ENCODE measurements at regions of chr12 and their contacts with region 1.

Region 1: GRCh38 chr12:9073076-9073475 is 42.6 kb downstream of the A2M start:
- DNase-seq: no peak
- ATAC-seq: no peak
- H3K4me3 ChIP-seq: no peak overlapping the region
- H3K27ac ChIP-seq: no peak overlapping the region
- H3K4me1 ChIP-seq: no peaks in the 10 kb centered on the region
- H3K27me3 ChIP-seq: no peaks in the 10 kb centered on the region
- CTCF ChIP-seq: no peak

Region 2: DNA sequence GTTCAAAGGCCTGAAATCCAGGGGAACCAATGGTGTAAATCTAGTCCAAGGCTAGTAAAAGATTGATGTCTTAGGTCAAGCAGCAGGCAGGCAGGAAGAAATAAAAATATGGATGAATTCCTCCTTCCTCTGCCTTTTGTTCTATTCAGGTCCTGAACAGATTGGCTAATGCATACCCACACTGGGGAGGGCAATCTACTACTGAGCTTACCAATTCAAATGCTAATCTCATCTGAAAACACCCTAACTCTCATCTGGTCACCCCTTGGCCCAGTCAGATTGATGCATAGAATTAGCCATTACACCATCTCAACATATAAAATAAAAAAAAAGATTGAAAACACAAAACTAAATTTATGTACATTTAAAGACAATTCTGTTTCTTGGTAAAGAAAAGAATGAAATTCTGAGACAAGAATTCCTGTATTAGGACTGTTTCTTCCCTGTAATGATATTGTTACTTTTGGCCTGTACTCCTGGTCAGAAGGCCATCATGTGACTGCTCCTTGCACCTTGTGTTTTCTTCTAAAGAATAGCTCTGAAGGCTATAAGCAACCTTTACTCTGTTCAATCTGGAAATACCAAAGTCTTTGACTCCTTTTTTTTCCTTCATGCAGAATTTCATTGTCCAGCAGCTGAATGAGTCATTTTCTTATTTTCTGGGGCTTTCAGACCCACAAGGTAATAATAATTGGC is 597.4 kb before region 1 on chr12:
- intact Hi-C with region 1: no loop called
- DNase-seq: no peak
- ATAC-seq: no peak
- H3K4me3 ChIP-seq: no peak overlapping the region
- H3K27ac ChIP-seq: no peak overlapping the region
- H3K4me1 ChIP-seq: no peaks in the 10 kb centered on the region
- H3K27me3 ChIP-seq: no peaks in the 10 kb centered on the region
- CTCF ChIP-seq: no peak

Region 3: GRCh38 chr12:9106610-9107541 is 33.8 kb after region 1 on chr12:
- intact Hi-C with region 1: loop called (anchors 5 kb)
- DNase-seq: no peak
- ATAC-seq: no peak
- H3K4me3 ChIP-seq: no peak overlapping the region
- H3K27ac ChIP-seq: no peak overlapping the region
- H3K4me1 ChIP-seq: no peaks in the 10 kb centered on the region
- H3K27me3 ChIP-seq: no peaks in the 10 kb centered on the region
- CTCF ChIP-seq: no peak

Region 4: GRCh38 chr12:9604287-9604686 is 531.2 kb after region 1 on chr12:
- intact Hi-C with region 1: no loop called
- DNase-seq: no peak
- ATAC-seq: no peak
- H3K4me3 ChIP-seq: no peak overlapping the region
- H3K27ac ChIP-seq: no peak overlapping the region
- H3K4me1 ChIP-seq: no peaks in the 10 kb centered on the region
- H3K27me3 ChIP-seq: no peaks in the 10 kb centered on the region
- CTCF ChIP-seq: no peak